ENCODE measurements at regions of chr3 and their contacts with region 1.

Region 1: DNA sequence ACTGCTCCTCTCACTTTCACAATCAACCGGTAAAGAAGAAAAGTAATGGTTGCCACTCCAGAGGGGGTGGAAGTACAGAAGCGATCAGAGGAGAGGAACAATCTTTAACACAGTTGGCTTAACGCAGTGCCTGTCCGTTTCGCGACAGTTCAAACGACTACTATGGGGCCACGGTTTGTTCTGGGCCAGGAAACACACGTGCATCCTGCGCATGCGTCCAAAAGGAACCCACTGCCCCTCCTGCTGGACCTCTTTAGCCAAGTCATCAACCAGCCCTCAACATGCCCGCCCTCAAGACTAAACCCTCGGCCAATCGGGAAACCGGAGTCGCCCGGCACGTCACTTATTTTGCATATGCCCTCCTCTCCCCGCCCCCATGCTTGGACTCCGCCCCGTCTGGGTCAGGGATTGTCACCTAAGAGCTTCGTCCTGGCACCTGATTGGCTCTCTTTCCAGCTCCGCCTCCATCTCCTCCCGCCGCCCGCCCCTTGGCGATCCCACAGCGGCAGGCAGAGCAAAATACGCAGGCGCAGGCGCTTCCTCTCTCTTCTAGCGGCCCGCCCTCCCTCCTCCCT is 345 bp upstream of the CDV3 start:
- DNase-seq: peak; percentile 100

Region 2: GRCh38 chr3:132722164-132723024 is 850.7 kb before region 1 on chr3 and contains the start of gene NPHP3:
- intact Hi-C with region 1: loop called (anchors 2 kb)
- DNase-seq: peak; percentile 90 to 99 (median 96)

Region 3: GRCh38 chr3:133077688-133078087 is 495.5 kb before region 1 on chr3:
- intact Hi-C with region 1: no loop called
- DNase-seq: no peak

Region 4: GRCh38 chr3:133448478-133449122 is 124.5 kb before region 1 on chr3:
- intact Hi-C with region 1: loop called (anchors 10 kb)
- DNase-seq: no peak

Region 5: GRCh38 chr3:133745981-133746711 is 173.0 kb after region 1 on chr3 and contains the start of gene TF:
- intact Hi-C with region 1: loop called (anchors 5 kb)
- DNase-seq: peak; percentile 73 to 98 (median 90)